Posterior vena cava (tissue), 2 donors: ENCODE measurements at regions of chr18 and their contacts with region 1.

Region 1: GRCh38 chr18:4157352-4157751 is 297.8 kb downstream of the DLGAP1 start:
- DNase-seq: no peak

Region 2: GRCh38 chr18:3481696-3482210 is 675.6 kb before region 1 on chr18:
- intact Hi-C with region 1: loop called in 1 of 2 experiments (anchors 5 kb)
- DNase-seq: no peak